ENCODE measurements at regions of chr3 and their contacts with region 1.

Region 1: DNA sequence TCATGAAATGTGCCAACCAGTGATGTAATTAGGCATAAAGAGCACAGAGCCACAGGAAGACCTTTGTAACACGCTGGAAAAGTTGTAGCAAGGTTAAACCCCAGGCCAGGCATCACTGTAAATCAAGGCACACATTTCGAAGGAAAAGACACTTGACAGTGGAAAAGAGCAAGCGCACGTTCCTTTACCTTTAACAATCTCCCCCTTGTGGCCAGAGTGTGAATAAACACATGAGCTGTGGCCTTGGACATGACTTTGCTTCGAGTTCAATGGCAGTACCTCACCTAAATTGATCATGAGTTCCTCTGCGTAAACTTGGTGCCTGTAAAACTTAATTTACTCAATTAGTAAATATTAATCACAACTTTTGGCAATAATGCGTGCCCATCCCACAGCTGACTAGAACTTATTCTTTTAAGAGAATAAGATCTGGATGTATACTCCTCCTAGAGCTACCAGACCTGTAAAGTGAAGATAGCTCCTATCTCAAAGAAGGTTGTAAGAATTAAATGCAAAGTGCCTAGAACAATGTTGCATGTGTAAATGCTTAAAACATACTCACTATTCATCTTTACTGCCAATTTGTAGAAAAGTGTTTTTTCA is 757.0 kb upstream of the NECTIN3 start:
- DNase-seq: peak; percentile 66
- ATAC-seq: peak; percentile 80
- H3K4me3 Mint-ChIP-seq: no peak overlapping the region
- H3K27ac Mint-ChIP-seq: no peak overlapping the region
- H3K4me1 Mint-ChIP-seq: peaks cover 5% of the 10 kb centered on the region
- H3K27me3 Mint-ChIP-seq: peaks cover 3% of the 10 kb centered on the region
- CTCF ChIP-seq: peak; percentile 81

Region 2: DNA sequence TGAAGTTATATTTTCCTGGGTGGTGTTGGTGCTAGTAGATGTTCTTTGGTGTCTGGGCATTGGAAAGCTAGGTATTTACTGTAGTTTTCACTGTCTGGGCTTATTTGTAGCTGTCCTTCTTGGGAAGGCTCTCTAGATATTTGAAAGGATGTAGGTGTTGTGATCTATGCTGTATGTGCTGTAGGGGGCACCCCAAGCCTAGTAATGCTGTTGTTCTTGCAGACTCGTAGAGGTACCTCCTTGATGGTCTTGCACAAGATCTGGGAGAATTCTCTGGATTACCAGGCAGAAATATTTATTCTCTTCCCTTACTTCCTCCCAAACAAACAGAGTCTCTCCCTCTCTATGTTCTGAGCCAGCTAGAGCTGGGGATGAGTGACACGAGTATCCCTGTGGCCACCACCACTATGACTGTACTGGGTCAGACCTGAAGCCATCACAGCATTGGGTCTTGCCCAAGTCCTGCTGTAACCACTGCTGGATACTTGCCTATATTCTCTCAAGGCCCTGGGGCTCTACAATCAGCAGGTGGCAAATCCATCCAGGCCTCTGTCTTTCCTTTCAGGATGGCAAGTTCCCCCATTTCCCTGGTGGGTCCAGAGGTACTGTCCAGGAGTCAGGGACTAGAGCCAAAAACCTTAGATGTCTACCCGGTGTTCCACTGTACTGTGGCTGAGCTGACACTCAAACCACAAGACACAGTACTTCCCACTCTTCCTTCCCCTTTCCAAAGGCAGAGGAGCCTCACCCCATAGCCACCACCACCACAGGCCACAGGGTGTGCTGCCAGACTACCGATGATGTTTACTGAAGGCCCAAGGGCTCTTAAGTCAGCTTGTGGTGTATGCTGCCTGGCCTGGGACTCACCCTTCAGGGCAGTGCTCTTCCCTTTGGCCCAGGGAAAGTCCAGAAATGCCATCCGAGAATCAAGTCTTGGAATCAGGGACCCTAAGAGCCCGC is 782.1 kb before region 1 on chr3:
- CTCF ChIA-PET with region 1: interaction called, 16 read pairs
- POLR2A ChIA-PET with region 1: no interaction called
- intact Hi-C with region 1: loop called (anchors 10 kb)
- DNase-seq: peak; percentile 74
- ATAC-seq: no peak
- H3K4me3 Mint-ChIP-seq: no peak overlapping the region
- H3K27ac Mint-ChIP-seq: no peak overlapping the region
- H3K4me1 Mint-ChIP-seq: no peaks in the 10 kb centered on the region
- H3K27me3 Mint-ChIP-seq: peaks cover 2% of the 10 kb centered on the region
- CTCF ChIP-seq: peak; percentile 40

Region 3: GRCh38 chr3:109731620-109732473 is 582.8 kb before region 1 on chr3:
- CTCF ChIA-PET with region 1: interaction called, 8 read pairs
- POLR2A ChIA-PET with region 1: no interaction called
- intact Hi-C with region 1: loop called (anchors 2 kb)
- DNase-seq: peak; percentile 71
- ATAC-seq: peak; percentile 87
- H3K4me3 Mint-ChIP-seq: no peak overlapping the region
- H3K27ac Mint-ChIP-seq: no peak overlapping the region
- H3K4me1 Mint-ChIP-seq: peaks cover 3% of the 10 kb centered on the region
- H3K27me3 Mint-ChIP-seq: no peaks in the 10 kb centered on the region
- CTCF ChIP-seq: peak; percentile 93

Region 4: GRCh38 chr3:110327870-110328269 is 13.3 kb after region 1 on chr3:
- CTCF ChIA-PET with region 1: interaction called, 20 read pairs
- POLR2A ChIA-PET with region 1: no interaction called
- intact Hi-C with region 1: no loop called
- DNase-seq: no peak
- ATAC-seq: no peak
- H3K4me3 Mint-ChIP-seq: no peak overlapping the region
- H3K27ac Mint-ChIP-seq: no peak overlapping the region
- H3K4me1 Mint-ChIP-seq: no peaks in the 10 kb centered on the region
- H3K27me3 Mint-ChIP-seq: peaks cover 2% of the 10 kb centered on the region
- CTCF ChIP-seq: no peak